Activated CD8-positive, alpha-beta T cell treated with anti-CD3 and anti-CD28 coated beads, Interleukin-2, amount 10 ng/mL, durations not matched to agents 7 days and 5 days (primary cell): ENCODE measurements at regions of chr14 and their contacts with region 1.

Region 1: GRCh38 chr14:106605548-106606448 is 1079.4 kb downstream of the TMEM121 start:
- DNase-seq: peak; percentile 88
- ATAC-seq: peak; percentile 100
- H3K4me3 Mint-ChIP-seq: no peak overlapping the region
- H3K27ac Mint-ChIP-seq: no peak overlapping the region
- H3K4me1 Mint-ChIP-seq: no peaks in the 10 kb centered on the region
- H3K27me3 Mint-ChIP-seq: peaks cover 70% of the 10 kb centered on the region

Region 2: GRCh38 chr14:106268013-106268727 is 337.6 kb before region 1 on chr14:
- CTCF ChIA-PET with region 1: no interaction called
- POLR2A ChIA-PET with region 1: no interaction called
- DNase-seq: peak; percentile 80
- ATAC-seq: peak; percentile 57
- H3K4me3 Mint-ChIP-seq: no peak overlapping the region
- H3K27ac Mint-ChIP-seq: no peak overlapping the region
- H3K4me1 Mint-ChIP-seq: peaks cover 9% of the 10 kb centered on the region
- H3K27me3 Mint-ChIP-seq: peaks cover 14% of the 10 kb centered on the region

Region 3: GRCh38 chr14:106564058-106564656 is 41.6 kb before region 1 on chr14:
- CTCF ChIA-PET with region 1: interaction called, 13 read pairs
- POLR2A ChIA-PET with region 1: no interaction called
- DNase-seq: peak; percentile 79
- ATAC-seq: peak; percentile 77
- H3K4me3 Mint-ChIP-seq: no peak overlapping the region
- H3K27ac Mint-ChIP-seq: no peak overlapping the region
- H3K4me1 Mint-ChIP-seq: no peaks in the 10 kb centered on the region
- H3K27me3 Mint-ChIP-seq: peaks cover 35% of the 10 kb centered on the region

Region 4: GRCh38 chr14:106586098-106586704 is 19.6 kb before region 1 on chr14:
- CTCF ChIA-PET with region 1: interaction called, 24 read pairs
- POLR2A ChIA-PET with region 1: no interaction called
- DNase-seq: peak; percentile 78
- ATAC-seq: peak; percentile 87
- H3K4me3 Mint-ChIP-seq: no peak overlapping the region
- H3K27ac Mint-ChIP-seq: no peak overlapping the region
- H3K4me1 Mint-ChIP-seq: peaks cover 17% of the 10 kb centered on the region
- H3K27me3 Mint-ChIP-seq: peaks cover 27% of the 10 kb centered on the region